ENCODE measurements at regions of chrX and their contacts with region 1.

Region 1: GRCh38 chrX:72126539-72127140 is 5.1 kb downstream of the RTL5 start:
- DNase-seq: peak; percentile 89

Region 2: DNA sequence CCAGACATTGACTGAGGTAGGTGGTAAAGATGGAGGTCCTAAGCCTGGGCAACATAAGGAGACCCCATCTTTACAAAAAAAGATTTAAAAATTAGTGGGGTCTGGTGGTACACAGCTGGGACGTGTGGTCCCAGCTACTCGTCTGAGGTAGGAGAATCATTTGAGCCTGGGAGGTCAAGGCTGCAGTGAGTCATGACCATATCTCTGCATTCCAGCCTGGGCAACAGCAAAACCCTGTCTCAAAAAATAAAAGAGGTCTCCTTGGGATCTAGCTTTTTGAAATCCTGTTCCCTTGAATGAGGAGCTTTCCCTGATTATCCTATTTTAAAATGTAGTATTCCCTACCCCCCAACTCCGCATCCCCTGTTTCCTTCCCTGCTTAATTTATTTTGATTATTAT is 672.4 kb before region 1 on chrX:
- in situ Hi-C with region 1: no loop called
- DNase-seq: no peak

Region 3: DNA sequence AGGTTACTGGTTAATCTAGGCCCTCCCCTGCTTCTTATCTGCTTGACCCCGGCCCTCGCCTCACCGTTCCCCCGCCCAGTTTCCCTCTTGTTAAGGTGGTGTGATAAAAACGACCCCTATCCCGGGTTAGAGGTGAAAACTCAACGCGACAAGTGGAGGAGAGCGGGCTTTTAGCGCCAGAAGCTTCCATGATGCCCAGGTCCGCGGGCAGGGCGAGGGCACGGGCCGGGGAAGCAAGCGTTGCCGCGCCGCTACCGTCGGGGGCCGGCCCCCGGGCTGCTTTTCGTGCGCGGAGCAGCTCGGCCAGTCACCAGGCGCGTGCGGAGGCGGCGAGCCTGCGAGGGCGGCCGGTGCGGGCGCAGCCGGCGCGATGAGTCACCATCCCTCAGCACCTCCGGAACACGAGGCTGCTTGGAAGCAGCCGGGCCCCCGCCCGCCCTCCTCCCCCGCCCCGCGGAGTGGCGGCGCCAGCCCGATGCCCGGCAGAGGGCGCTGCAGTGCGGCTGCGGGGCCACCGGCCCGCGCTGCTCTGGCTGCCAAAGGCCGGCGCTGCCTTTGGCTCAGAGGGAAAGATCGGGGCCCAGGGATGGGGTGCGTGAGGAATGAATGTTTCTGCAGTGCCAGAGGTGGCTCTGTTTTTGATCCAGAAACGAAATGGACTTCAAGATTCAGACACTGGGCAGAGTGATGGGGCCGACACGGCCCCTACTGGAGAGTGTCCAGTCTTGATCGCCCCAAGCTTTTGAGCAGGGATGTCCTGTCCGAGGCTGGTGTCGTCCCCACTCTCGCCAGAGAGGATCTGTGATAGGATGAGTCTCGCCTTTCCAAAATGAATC is 108.1 kb before region 1 on chrX:
- in situ Hi-C with region 1: loop called (anchors 5 kb)
- DNase-seq: peak; percentile 75